ENCODE measurements at regions of chr7 and their contacts with region 1.

Region 1: DNA sequence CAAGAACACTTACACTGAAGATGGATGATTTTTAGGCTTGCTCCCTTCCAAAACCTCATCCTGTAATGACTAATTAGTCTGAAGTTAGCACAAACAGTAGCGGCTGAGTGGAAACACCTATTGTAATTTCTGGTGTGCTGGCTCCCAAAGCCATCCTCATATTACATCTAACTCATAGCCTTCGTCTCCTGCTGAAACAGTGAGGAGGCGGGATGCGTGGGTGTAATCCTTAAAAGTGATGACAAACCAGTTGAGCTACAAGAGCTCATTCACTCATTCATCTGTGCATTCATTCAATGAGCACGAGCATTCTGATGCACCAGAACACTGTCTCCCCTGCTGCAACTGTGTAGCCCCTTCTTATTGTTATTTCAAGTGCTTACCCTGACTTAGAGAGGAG is 235.3 kb downstream of the CALN1 start:
- DNase-seq: no peak
- H3K4me3 Mint-ChIP-seq: no peak overlapping the region
- H3K27ac Mint-ChIP-seq: no peak overlapping the region
- H3K4me1 Mint-ChIP-seq: no peaks in the 10 kb centered on the region
- H3K27me3 Mint-ChIP-seq: no peaks in the 10 kb centered on the region
- CTCF ChIP-seq: no peak

Region 2: GRCh38 chr7:72493850-72494661 is 317.2 kb after region 1 on chr7:
- CTCF ChIA-PET with region 1: no interaction called
- intact Hi-C with region 1: loop called (anchors 10 kb)
- DNase-seq: peak; percentile 67
- H3K4me3 Mint-ChIP-seq: no peak overlapping the region
- H3K27ac Mint-ChIP-seq: no peak overlapping the region
- H3K4me1 Mint-ChIP-seq: no peaks in the 10 kb centered on the region
- H3K27me3 Mint-ChIP-seq: no peaks in the 10 kb centered on the region
- CTCF ChIP-seq: peak; percentile 39